Activated T-helper 1 cell treated with anti-CD3 and anti-CD28 coated beads, Interleukin-12 subunit alpha, Interleukin-12 subunit beta, Interleukin-2, Interleukin-4 antibody, amounts not matched to agents 30 ng/mL and 10 ng/mL and 1 ng/mL, durations not matched to agents 14 hours and 24 hours and 36 hours (primary cell): ENCODE measurements at regions of chr17 and their contacts with region 1.

Region 1: DNA sequence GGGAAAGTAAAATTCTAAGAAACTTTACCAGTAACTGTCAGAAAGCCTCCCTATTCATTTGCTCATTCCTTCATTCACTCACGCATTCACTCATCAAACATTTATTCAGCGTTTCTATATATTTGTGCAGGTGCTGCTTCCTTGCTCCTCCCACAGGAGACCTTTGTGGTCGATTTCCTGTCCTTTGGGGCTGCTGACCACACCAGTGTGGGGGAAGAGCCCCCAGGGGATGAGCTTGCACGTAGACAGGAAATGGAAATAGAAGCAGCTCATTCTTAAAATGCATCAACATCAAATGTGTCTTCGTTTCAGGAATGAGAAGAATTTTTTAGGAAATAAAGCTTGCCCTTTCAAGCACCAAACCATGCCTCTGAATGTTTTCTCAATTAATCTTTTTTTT is 9.6 kb downstream of the PIK3R6 start:
- DNase-seq: peak; percentile 44
- H3K4me3 Mint-ChIP-seq: peak overlapping the region; percentile 73
- H3K27ac Mint-ChIP-seq: peak overlapping the region; percentile 94
- H3K4me1 Mint-ChIP-seq: peaks cover 60% of the 10 kb centered on the region
- H3K27me3 Mint-ChIP-seq: no peaks in the 10 kb centered on the region

Region 2: GRCh38 chr17:8846768-8847211 is 11.1 kb before region 1 on chr17:
- intact Hi-C with region 1: no loop called
- DNase-seq: no peak
- H3K4me3 Mint-ChIP-seq: no peak overlapping the region
- H3K27ac Mint-ChIP-seq: no peak overlapping the region
- H3K4me1 Mint-ChIP-seq: no peaks in the 10 kb centered on the region
- H3K27me3 Mint-ChIP-seq: no peaks in the 10 kb centered on the region

Region 3: DNA sequence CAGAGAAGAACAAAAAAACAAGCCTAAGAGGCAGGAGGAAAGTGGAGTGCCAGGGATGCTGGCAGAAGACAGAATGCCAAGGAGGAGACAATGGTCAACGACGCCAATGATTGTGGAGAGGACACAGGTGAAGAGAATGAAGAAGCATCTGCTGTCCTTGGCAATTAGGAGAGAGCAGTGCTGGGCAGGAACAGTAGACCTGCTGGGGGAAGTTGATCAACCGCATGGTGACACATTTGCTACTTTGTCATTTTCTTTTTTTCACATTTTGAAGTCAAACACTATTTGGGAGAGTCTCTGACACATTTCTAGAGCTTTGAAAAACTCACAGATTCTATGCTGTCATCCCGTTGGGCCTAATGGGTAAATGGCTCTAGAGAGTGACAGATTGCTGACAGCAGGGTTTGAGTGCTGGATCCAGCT is 10.6 kb after region 1 on chr17:
- intact Hi-C with region 1: loop called (anchors 1 kb)
- DNase-seq: no peak
- H3K4me3 Mint-ChIP-seq: peak overlapping the region; percentile 83
- H3K27ac Mint-ChIP-seq: peak overlapping the region; percentile 18
- H3K4me1 Mint-ChIP-seq: peaks cover 35% of the 10 kb centered on the region
- H3K27me3 Mint-ChIP-seq: no peaks in the 10 kb centered on the region

Region 4: DNA sequence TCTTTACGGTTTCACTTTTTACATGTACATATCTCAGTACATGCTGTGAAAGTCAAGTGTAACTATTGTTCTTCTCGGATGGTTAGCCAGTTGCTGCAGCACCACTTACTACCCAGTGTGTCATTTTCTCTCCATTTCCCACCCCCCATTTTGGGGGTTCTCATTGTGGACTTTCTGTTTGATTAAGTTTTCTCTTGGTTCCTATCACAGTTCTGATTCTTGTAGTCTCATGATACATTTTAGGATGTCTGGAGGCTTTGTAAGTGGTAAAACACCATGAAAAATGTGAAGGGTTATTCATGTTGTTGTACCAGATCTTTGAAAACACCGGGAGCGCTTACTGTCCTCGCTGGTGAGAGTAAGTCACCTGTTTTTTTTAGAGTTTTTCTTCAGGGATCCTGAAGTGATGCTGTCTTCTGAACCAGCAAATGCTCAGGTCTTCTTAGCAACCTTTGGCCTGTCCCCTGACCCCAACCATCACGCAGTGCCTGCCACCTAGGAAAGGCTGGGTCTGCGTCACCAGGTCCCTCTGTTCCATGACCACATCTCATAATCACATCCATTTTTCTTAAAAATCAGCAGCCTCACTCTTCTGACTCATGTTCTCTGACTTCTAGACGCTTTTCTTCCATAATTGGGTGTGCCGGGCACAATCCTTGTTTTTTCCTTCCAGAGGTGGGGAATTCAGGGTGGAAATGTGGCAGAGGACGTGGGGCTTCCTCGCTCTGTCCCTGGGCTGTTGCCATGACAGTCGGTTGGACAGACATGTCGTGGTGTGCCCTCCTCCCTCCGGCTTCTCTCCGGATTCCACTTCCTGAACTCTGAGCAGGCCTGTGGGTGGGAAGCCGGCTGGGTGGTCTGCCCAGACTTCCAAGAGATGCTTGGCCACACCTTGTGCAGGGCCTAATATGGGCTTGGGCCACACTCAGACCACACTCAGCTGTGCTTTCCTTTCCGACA is 266.0 kb after region 1 on chr17:
- intact Hi-C with region 1: no loop called
- DNase-seq: no peak
- H3K4me3 Mint-ChIP-seq: no peak overlapping the region
- H3K27ac Mint-ChIP-seq: no peak overlapping the region
- H3K4me1 Mint-ChIP-seq: no peaks in the 10 kb centered on the region
- H3K27me3 Mint-ChIP-seq: no peaks in the 10 kb centered on the region